T-cell (primary cell): ENCODE measurements at regions of chr10 and their contacts with region 1.

Region 1: GRCh38 chr10:119859420-119860258 is 13.0 kb downstream of the MCMBP start:
- DNase-seq: peak in 1 of 35 experiments; percentile 71
- ATAC-seq: peak in 3 of 4 experiments; percentile 58 to 60 (median 59)
- H3K4me3 ChIP-seq: no peak overlapping the region
- H3K4me3 Mint-ChIP-seq: no peak overlapping the region
- H3K27ac ChIP-seq: no peak overlapping the region
- H3K27ac Mint-ChIP-seq: peak overlapping the region; percentile 48 to 49
- H3K4me1 ChIP-seq: peaks cover 5 to 8% of the 10 kb centered on the region in 2 experiments
- H3K4me1 Mint-ChIP-seq: peaks cover 45 to 49% (median 47%) of the 10 kb centered on the region in 3 donors
- H3K27me3 ChIP-seq: no peaks in the 10 kb centered on the region
- H3K27me3 Mint-ChIP-seq: no peaks in the 10 kb centered on the region

Region 2: GRCh38 chr10:119604468-119604867 is 255.2 kb before region 1 on chr10:
- CTCF ChIA-PET with region 1: interaction called, 3 to 13 read pairs
- POLR2A ChIA-PET with region 1: no interaction called
- DNase-seq: no peak
- ATAC-seq: no peak
- H3K4me3 ChIP-seq: no peak overlapping the region
- H3K4me3 Mint-ChIP-seq: no peak overlapping the region
- H3K27ac ChIP-seq: no peak overlapping the region
- H3K27ac Mint-ChIP-seq: no peak overlapping the region
- H3K4me1 ChIP-seq: peaks cover 2 to 8% of the 10 kb centered on the region in 2 experiments
- H3K4me1 Mint-ChIP-seq: peaks cover 5 to 13% (median 11%) of the 10 kb centered on the region in 3 donors
- H3K27me3 ChIP-seq: peaks cover 0 to 3% of the 10 kb centered on the region in 2 experiments
- H3K27me3 Mint-ChIP-seq: peaks cover 0 to 2% of the 10 kb centered on the region in 2 donors

Region 3: DNA sequence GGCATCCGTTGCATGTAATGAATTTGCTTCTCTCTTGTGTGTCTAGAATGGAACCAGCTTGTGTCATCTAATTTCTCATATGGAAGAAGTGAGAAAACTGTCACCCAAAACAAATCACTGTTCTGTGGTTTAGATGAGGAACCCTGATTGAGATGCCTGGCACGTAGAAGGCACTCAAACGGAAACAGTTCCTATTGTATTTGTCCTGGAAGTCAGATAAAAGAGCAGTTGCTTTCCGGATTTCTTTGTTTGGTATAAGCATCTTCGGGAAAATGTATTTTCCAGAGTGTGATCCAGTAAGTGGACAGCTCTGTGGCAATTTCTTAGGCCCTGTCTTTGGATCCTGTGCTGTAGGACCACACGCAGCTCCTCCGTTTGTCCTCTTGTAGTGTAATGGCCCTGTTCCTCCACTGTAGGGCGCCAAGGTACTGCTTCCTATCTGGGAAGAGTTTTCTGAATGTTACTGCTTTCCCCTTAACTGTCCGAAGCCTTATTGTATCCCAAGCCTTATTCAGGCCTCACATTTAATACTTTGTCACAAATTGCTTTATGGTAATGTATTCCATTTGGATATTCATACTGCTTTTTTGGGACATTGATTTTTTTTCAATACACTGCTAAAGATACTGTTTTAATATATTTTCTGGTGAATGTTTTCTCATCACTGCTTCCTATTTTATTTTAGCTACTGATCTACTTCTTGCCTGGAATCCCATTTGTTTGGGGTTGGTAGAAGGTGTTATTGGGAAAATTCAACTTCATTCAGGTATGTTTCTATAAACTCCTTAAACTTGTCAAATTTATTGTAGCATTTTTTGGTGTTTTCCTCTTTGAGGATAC is 109.0 kb before region 1 on chr10:
- CTCF ChIA-PET with region 1: interaction called, 16 to 24 read pairs
- POLR2A ChIA-PET with region 1: no interaction called
- DNase-seq: peak in 34 of 35 experiments; percentile 13 to 74 (median 44)
- ATAC-seq: peak; percentile 82 to 88 (median 84)
- H3K4me3 ChIP-seq: no peak overlapping the region
- H3K4me3 Mint-ChIP-seq: no peak overlapping the region
- H3K27ac ChIP-seq: no peak overlapping the region
- H3K27ac Mint-ChIP-seq: peak overlapping the region; percentile 76 to 78
- H3K4me1 ChIP-seq: no peaks in the 10 kb centered on the region
- H3K4me1 Mint-ChIP-seq: peaks cover 7 to 15% (median 11%) of the 10 kb centered on the region in 3 donors
- H3K27me3 ChIP-seq: no peaks in the 10 kb centered on the region
- H3K27me3 Mint-ChIP-seq: no peaks in the 10 kb centered on the region

Region 4: DNA sequence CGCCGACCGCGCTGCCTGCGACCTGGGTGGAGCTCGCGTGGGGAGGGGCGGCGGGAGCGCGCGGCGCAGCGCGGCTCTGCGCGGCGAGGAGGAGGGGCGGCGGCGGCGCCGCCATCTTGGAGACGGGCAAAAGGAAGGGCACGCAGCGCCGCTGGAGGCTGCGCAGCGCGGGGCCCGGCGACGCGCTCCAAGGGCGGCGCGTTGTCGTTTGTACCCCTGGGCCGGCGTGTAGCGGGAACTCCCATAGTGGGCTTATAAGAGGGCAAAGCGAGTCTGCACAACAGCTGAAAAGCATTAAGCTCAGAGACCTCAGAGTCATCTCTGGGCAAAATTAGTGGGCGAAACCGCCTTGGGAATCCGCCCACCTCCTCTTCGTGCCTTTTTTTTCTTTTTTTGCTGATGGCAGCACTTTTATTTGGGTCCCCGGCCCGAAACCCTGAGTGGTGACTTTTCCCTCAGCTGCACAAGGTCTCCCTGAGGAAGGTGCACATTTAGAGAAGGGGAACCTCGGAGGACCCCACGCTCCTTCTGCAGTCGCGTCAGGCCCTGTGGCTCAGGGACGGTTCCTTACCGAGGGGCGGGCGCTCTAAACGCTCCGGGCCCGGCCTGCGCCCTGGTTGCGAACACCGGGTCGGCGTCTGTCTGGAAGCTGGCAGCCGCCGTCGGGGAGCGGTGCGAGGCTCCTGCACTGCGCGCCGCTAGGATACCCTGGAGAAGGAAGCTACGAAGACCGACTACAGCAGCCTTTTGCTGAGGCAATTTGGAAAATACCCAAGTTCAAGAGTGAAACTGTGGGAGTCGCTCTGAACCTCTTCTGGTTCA is 13.4 kb after region 1 on chr10:
- CTCF ChIA-PET with region 1: interaction called, 8 to 39 read pairs
- POLR2A ChIA-PET with region 1: interaction called in 1 of 2 experiments, 6 read pairs
- DNase-seq: peak; percentile 76 to 95 (median 86)
- ATAC-seq: peak; percentile 92 to 96 (median 92)
- H3K4me3 ChIP-seq: peak overlapping the region; percentile 87 to 90
- H3K4me3 Mint-ChIP-seq: peak overlapping the region; percentile 83 to 89 (median 86)
- H3K27ac ChIP-seq: peak overlapping the region; percentile 85
- H3K27ac Mint-ChIP-seq: peak overlapping the region; percentile 87 to 92
- H3K4me1 ChIP-seq: peaks cover 15 to 30% of the 10 kb centered on the region in 2 experiments
- H3K4me1 Mint-ChIP-seq: peaks cover 40 to 45% (median 44%) of the 10 kb centered on the region in 3 donors
- H3K27me3 ChIP-seq: no peaks in the 10 kb centered on the region
- H3K27me3 Mint-ChIP-seq: no peaks in the 10 kb centered on the region